MCF 10A (cell line): ENCODE measurements at regions of chr3 and their contacts with region 1.

Region 1: GRCh38 chr3:188954590-188955208 is 217.1 kb upstream of the TPRG1 start:
- DNase-seq: peak; percentile 94
- H3K4me3 Mint-ChIP-seq: no peak overlapping the region
- H3K27ac Mint-ChIP-seq: no peak overlapping the region
- H3K4me1 Mint-ChIP-seq: peaks cover 11% of the 10 kb centered on the region
- H3K27me3 Mint-ChIP-seq: no peaks in the 10 kb centered on the region
- CTCF ChIP-seq: peak; percentile 92

Region 2: GRCh38 chr3:187919048-187919447 is 1035.7 kb before region 1 on chr3:
- CTCF ChIA-PET with region 1: interaction called, 4 read pairs
- POLR2A ChIA-PET with region 1: no interaction called
- intact Hi-C with region 1: loop called (anchors 10 kb)
- DNase-seq: no peak
- H3K4me3 Mint-ChIP-seq: no peak overlapping the region
- H3K27ac Mint-ChIP-seq: no peak overlapping the region
- H3K4me1 Mint-ChIP-seq: peaks cover 11% of the 10 kb centered on the region
- H3K27me3 Mint-ChIP-seq: no peaks in the 10 kb centered on the region
- CTCF ChIP-seq: no peak

Region 3: DNA sequence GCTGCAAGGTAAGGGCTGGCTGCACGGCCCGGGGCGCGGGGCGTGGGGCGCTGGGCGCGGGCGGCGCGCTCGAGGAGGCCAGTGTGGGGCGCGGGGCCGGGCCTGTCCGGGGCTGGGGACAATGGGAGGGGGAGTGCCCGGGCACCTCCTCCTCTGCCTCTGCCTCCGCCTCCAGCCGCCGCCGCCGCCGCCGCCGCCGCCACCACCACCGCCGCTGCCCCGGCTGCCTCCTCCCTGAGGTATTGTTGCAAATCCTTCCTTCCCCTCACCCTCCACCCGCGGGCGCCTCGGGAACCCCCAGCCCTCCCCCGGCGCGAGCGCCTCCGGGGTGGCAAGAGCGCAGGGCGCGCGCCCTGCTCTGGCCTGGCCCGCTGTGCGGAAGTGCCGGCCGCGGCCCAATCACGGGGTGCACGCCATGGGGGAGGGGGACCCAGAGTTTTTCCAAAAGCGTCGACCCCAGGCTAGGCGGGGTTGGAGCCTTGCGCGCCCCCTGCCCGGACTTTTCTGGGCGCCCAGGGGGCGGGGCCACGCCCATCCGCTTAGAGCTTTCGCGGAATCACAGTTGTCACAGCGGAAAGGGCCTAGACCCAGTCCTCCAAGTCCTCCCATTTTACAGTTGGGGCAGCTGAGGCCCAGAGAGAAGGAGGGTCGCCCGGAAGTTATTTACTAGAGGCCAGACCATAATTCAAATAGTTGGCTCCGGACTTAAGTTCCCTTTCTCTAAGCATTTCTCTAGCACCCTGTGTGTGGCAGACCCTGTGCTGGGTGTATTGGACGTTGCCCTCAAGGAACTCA is 800.5 kb before region 1 on chr3 and contains the start of gene LPP:
- CTCF ChIA-PET with region 1: no interaction called
- POLR2A ChIA-PET with region 1: interaction called, 7 read pairs
- intact Hi-C with region 1: loop called (anchors 5 kb)
- DNase-seq: peak; percentile 67
- H3K4me3 Mint-ChIP-seq: peak within 1 kb of the TSS; percentile 90
- H3K27ac Mint-ChIP-seq: peak within 1 kb of the TSS; percentile 96
- H3K4me1 Mint-ChIP-seq: peaks cover 42% of the 10 kb centered on the region
- H3K27me3 Mint-ChIP-seq: no peaks in the 10 kb centered on the region
- CTCF ChIP-seq: no peak
- total RNA-seq, gene LPP: 107 and 117 TPM in 2 replicates

Region 4: GRCh38 chr3:188594139-188594538 is 360.6 kb before region 1 on chr3:
- CTCF ChIA-PET with region 1: interaction called, 3 read pairs
- POLR2A ChIA-PET with region 1: no interaction called
- intact Hi-C with region 1: loop called (anchors 10 kb)
- DNase-seq: peak; percentile 77
- H3K4me3 Mint-ChIP-seq: no peak overlapping the region
- H3K27ac Mint-ChIP-seq: peak overlapping the region; percentile 86
- H3K4me1 Mint-ChIP-seq: peaks cover 46% of the 10 kb centered on the region
- H3K27me3 Mint-ChIP-seq: no peaks in the 10 kb centered on the region
- CTCF ChIP-seq: no peak

Region 5: GRCh38 chr3:188830893-188831292 is 123.8 kb before region 1 on chr3:
- CTCF ChIA-PET with region 1: interaction called, 37 read pairs
- POLR2A ChIA-PET with region 1: interaction called, 52 read pairs
- intact Hi-C with region 1: no loop called
- DNase-seq: peak; percentile 45
- H3K4me3 Mint-ChIP-seq: no peak overlapping the region
- H3K27ac Mint-ChIP-seq: no peak overlapping the region
- H3K4me1 Mint-ChIP-seq: peaks cover 21% of the 10 kb centered on the region
- H3K27me3 Mint-ChIP-seq: no peaks in the 10 kb centered on the region
- CTCF ChIP-seq: no peak

Region 6: DNA sequence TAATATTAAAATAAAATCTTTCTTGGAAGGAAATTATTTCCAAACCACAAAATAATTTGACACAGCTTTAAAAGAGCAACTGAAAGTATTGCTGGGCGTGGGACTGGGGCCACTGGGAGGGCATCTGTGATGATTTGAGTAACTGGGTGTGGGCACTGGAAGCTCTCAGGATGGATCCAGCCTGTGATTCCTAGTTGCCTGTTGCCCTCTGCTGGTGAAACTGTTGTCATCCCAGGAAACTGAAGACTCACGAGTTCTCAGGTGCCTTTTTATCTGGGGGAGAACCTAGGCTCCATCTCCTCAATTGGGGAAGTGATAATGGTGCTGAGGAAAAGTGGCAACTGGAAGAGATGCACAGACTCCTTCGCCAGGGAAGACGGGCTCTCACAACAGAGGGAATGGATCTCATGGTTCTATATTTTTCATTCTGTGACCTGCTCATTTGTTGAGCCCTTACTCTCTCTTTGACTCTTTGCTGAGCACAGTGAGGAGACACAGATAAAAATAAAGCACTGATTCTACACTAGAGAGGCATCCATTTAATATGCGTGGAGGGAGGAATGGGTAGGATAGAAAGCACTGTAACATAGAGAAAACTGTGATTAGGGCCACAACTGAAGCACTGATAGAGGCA is 278.6 kb after region 1 on chr3:
- CTCF ChIA-PET with region 1: interaction called, 23 read pairs
- POLR2A ChIA-PET with region 1: interaction called, 3 read pairs
- intact Hi-C with region 1: loop called (anchors 2 kb)
- DNase-seq: peak; percentile 78
- H3K4me3 Mint-ChIP-seq: no peak overlapping the region
- H3K27ac Mint-ChIP-seq: no peak overlapping the region
- H3K4me1 Mint-ChIP-seq: no peaks in the 10 kb centered on the region
- H3K27me3 Mint-ChIP-seq: no peaks in the 10 kb centered on the region
- CTCF ChIP-seq: peak; percentile 67